K562 (cell line): ENCODE measurements at regions of chr9 and their contacts with region 1.

Region 1: GRCh38 chr9:105694190-105694847 is at the start of gene TMEM38B:
- DNase-seq: peak; percentile 88 to 96 (median 94)
- ATAC-seq: peak; percentile 85
- H3K4me3 ChIP-seq: peak within 1 kb of the TSS; percentile 77
- H3K27ac ChIP-seq: peak within 1 kb of the TSS; percentile 77
- H3K4me1 ChIP-seq: peaks cover 6 to 19% of the 10 kb centered on the region in 2 experiments; a peak in 4 of 5 replicates
- H3K27me3 ChIP-seq: no peaks in the 10 kb centered on the region
- CTCF ChIP-seq: no peak
- EP300 ChIP-seq: no peak
- POLR2A ChIP-seq: peak; percentile 78
- RAD21 ChIP-seq: no peak
- polyA plus RNA-seq, gene TMEM38B: 42.0 to 57.5 TPM

Region 2: DNA sequence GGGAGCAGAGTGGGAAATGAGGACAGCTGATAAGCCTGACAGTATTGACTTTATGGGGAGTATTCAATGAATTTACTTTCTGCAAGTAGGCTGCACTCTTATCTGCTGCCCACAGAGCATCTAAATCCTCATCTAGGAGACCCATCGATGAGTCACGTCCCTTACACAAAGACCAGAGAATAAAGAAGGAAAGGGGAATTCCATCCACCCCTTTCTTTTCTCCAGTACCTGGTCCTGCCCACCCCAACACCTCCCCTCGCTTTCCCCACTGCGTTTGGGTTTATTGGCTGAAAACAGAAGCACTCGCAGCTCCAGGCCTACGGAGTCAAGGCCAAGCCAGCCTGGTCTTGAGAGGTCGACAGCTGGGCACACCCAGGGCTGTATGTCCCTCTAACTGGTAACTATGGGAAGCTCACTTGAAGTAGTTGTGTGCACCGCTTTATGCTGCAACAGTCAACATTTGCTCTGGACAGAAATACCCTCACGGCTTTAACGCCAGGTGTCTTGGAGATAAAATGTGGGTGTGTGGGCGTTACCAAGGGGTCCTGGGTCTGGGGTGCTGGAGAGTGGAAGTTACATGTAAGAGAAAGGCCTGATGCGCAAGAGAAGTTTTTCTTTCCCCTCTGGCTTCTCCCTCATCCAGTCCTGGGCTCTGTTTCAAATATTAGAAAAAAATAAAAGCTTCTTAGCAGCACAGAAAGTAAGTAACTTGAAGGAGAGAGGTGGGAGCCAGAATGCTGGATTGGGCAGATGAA is 46.5 kb before region 1 on chr9:
- CTCF ChIA-PET with region 1: no interaction called
- POLR2A ChIA-PET with region 1: interaction called, 3 read pairs
- in situ Hi-C with region 1: no loop called
- intact Hi-C with region 1: loop called (anchors 2 kb)
- DNase-seq: peak; percentile 77 to 90 (median 80)
- ATAC-seq: peak; percentile 85
- H3K4me3 ChIP-seq: peak overlapping the region; percentile 12; the same call in 1 of the 2 replicates
- H3K27ac ChIP-seq: peak overlapping the region; percentile 81
- H3K4me1 ChIP-seq: peaks cover 18 to 35% of the 10 kb centered on the region in 2 experiments; a peak in 4 of 5 replicates
- H3K27me3 ChIP-seq: no peaks in the 10 kb centered on the region
- CTCF ChIP-seq: no peak; a peak in 1 of 6 replicates
- EP300 ChIP-seq: peak; percentile 98
- POLR2A ChIP-seq: no peak
- RAD21 ChIP-seq: 0 out of 4 replicates have a peak, but pooled peaks of 1 of the 2 experiments have one; percentile 4

Region 3: DNA sequence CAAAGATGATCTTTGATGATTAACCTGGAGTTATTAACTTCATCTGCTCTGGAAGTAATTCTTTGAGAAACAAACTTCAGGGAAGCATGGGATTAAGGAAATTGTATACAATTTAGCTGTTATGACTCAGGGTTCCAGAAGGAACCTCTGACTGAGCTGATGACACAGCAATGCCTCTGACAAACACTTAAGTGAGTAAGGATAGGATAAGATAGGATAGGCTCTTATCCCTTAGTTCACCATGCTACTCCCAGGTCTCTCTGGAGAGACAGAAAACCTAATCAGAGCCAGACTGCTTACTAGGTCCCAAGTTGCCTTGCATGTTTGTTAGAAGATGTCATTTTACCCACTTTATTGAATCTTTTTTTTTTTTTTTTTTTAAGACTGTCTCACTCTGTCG is 12.6 kb before region 1 on chr9:
- CTCF ChIA-PET with region 1: interaction called, 3 read pairs
- POLR2A ChIA-PET with region 1: interaction called, 13 read pairs
- in situ Hi-C with region 1: no loop called
- intact Hi-C with region 1: no loop called
- DNase-seq: peak; percentile 68 to 85 (median 76)
- ATAC-seq: peak; percentile 96
- H3K4me3 ChIP-seq: no peak overlapping the region
- H3K27ac ChIP-seq: no peak overlapping the region; the same call in 2 of the 3 replicates
- H3K4me1 ChIP-seq: peaks cover 0 to 19% of the 10 kb centered on the region in 2 experiments; a peak in 2 of 5 replicates
- H3K27me3 ChIP-seq: no peaks in the 10 kb centered on the region
- CTCF ChIP-seq: no peak
- EP300 ChIP-seq: peak; percentile 80
- POLR2A ChIP-seq: no peak
- RAD21 ChIP-seq: no peak